B cell (primary cell): ENCODE measurements at regions of chr5 and their contacts with region 1.

Region 1: GRCh38 chr5:138213161-138214029 is at the start of gene CDC23:
- DNase-seq: peak; percentile 95
- ATAC-seq: peak; percentile 97
- H3K4me3 ChIP-seq: peak within 1 kb of the TSS; percentile 77 to 99 (median 93)
- H3K4me3 Mint-ChIP-seq: peak within 1 kb of the TSS; percentile 93
- H3K27ac ChIP-seq: peak within 1 kb of the TSS; percentile 52 to 87
- H3K27ac Mint-ChIP-seq: peak within 1 kb of the TSS; percentile 92
- H3K4me1 ChIP-seq: peaks cover 10 to 20% of the 10 kb centered on the region in 2 donors
- H3K4me1 Mint-ChIP-seq: peaks cover 19% of the 10 kb centered on the region
- H3K27me3 ChIP-seq: no peaks in the 10 kb centered on the region
- H3K27me3 Mint-ChIP-seq: no peaks in the 10 kb centered on the region
- CTCF ChIP-seq: no peak
- total RNA-seq, gene CDC23: 29.7 and 35.4 TPM in 2 replicates

Region 2: GRCh38 chr5:138083702-138084101 is 129.7 kb before region 1 on chr5 and contains the start of gene WNT8A:
- CTCF ChIA-PET with region 1: no interaction called
- POLR2A ChIA-PET with region 1: no interaction called
- intact Hi-C with region 1: no loop called
- DNase-seq: no peak
- ATAC-seq: no peak
- H3K4me3 ChIP-seq: no peak within 1 kb of the TSS
- H3K4me3 Mint-ChIP-seq: no peak within 1 kb of the TSS
- H3K27ac ChIP-seq: no peak within 1 kb of the TSS
- H3K27ac Mint-ChIP-seq: no peak within 1 kb of the TSS
- H3K4me1 ChIP-seq: peaks cover 3 to 15% of the 10 kb centered on the region in 2 donors
- H3K4me1 Mint-ChIP-seq: peaks cover 10% of the 10 kb centered on the region
- H3K27me3 ChIP-seq: no peaks in the 10 kb centered on the region
- H3K27me3 Mint-ChIP-seq: no peaks in the 10 kb centered on the region
- CTCF ChIP-seq: no peak
- total RNA-seq, gene WNT8A: not detected in 2 replicates

Region 3: GRCh38 chr5:138331449-138332368 is 118.3 kb after region 1 on chr5 and contains the start of gene CDC25C:
- CTCF ChIA-PET with region 1: no interaction called
- POLR2A ChIA-PET with region 1: no interaction called
- intact Hi-C with region 1: loop called (anchors 1 kb)
- DNase-seq: peak; percentile 97
- ATAC-seq: peak; percentile 100
- H3K4me3 ChIP-seq: peak within 1 kb of the TSS; percentile 60 to 75 (median 72)
- H3K4me3 Mint-ChIP-seq: peak within 1 kb of the TSS; percentile 87
- H3K27ac ChIP-seq: peak within 1 kb of the TSS in 1 of 2 donors; percentile 23
- H3K27ac Mint-ChIP-seq: peak within 1 kb of the TSS; percentile 61
- H3K4me1 ChIP-seq: peaks cover 7 to 15% of the 10 kb centered on the region in 2 donors
- H3K4me1 Mint-ChIP-seq: peaks cover 14% of the 10 kb centered on the region
- H3K27me3 ChIP-seq: no peaks in the 10 kb centered on the region
- H3K27me3 Mint-ChIP-seq: no peaks in the 10 kb centered on the region
- CTCF ChIP-seq: no peak
- total RNA-seq, gene CDC25C: not detected in 2 replicates

Region 4: GRCh38 chr5:138575194-138576015 is 362.0 kb after region 1 on chr5 and contains the start of gene HSPA9:
- CTCF ChIA-PET with region 1: no interaction called
- POLR2A ChIA-PET with region 1: interaction called, 6 read pairs
- intact Hi-C with region 1: loop called (anchors 2 kb)
- DNase-seq: peak; percentile 100
- ATAC-seq: peak; percentile 85
- H3K4me3 ChIP-seq: peak within 1 kb of the TSS; percentile 80 to 98 (median 96)
- H3K4me3 Mint-ChIP-seq: peak within 1 kb of the TSS; percentile 96
- H3K27ac ChIP-seq: peak within 1 kb of the TSS; percentile 99 to 100
- H3K27ac Mint-ChIP-seq: peak within 1 kb of the TSS; percentile 100
- H3K4me1 ChIP-seq: peaks cover 16% of the 10 kb centered on the region in 2 donors
- H3K4me1 Mint-ChIP-seq: peaks cover 30% of the 10 kb centered on the region
- H3K27me3 ChIP-seq: no peaks in the 10 kb centered on the region
- H3K27me3 Mint-ChIP-seq: no peaks in the 10 kb centered on the region
- CTCF ChIP-seq: no peak
- total RNA-seq, gene HSPA9: 139 and 142 TPM in 2 replicates

Region 5: GRCh38 chr5:139439013-139439903 is 1225.9 kb after region 1 on chr5 and contains the start of gene DNAJC18:
- CTCF ChIA-PET with region 1: no interaction called
- POLR2A ChIA-PET with region 1: no interaction called
- intact Hi-C with region 1: loop called (anchors 2 kb)
- DNase-seq: peak; percentile 93
- ATAC-seq: peak; percentile 94
- H3K4me3 ChIP-seq: peak within 1 kb of the TSS; percentile 53 to 97 (median 91)
- H3K4me3 Mint-ChIP-seq: peak within 1 kb of the TSS; percentile 97
- H3K27ac ChIP-seq: peak within 1 kb of the TSS; percentile 98 to 100
- H3K27ac Mint-ChIP-seq: peak within 1 kb of the TSS; percentile 99
- H3K4me1 ChIP-seq: peaks cover 11 to 12% of the 10 kb centered on the region in 2 donors
- H3K4me1 Mint-ChIP-seq: peaks cover 16% of the 10 kb centered on the region
- H3K27me3 ChIP-seq: no peaks in the 10 kb centered on the region
- H3K27me3 Mint-ChIP-seq: peaks cover 3% of the 10 kb centered on the region
- CTCF ChIP-seq: no peak
- total RNA-seq, gene DNAJC18: 13.6 and 16.5 TPM in 2 replicates

Region 6: GRCh38 chr5:139844472-139845145 is 1631.2 kb after region 1 on chr5:
- CTCF ChIA-PET with region 1: no interaction called
- POLR2A ChIA-PET with region 1: no interaction called
- intact Hi-C with region 1: loop called (anchors 5 kb)
- DNase-seq: peak; percentile 83
- ATAC-seq: peak; percentile 26
- H3K4me3 ChIP-seq: no peak overlapping the region
- H3K4me3 Mint-ChIP-seq: peak overlapping the region; percentile 17
- H3K27ac ChIP-seq: no peak overlapping the region
- H3K27ac Mint-ChIP-seq: peak overlapping the region; percentile 64
- H3K4me1 ChIP-seq: peaks cover 8 to 16% of the 10 kb centered on the region in 2 donors
- H3K4me1 Mint-ChIP-seq: peaks cover 15% of the 10 kb centered on the region
- H3K27me3 ChIP-seq: peaks cover 0 to 36% (median 18%) of the 10 kb centered on the region in 4 experiments
- H3K27me3 Mint-ChIP-seq: peaks cover 30% of the 10 kb centered on the region
- CTCF ChIP-seq: peak; percentile 85